ENCODE measurements at regions of chrX and their contacts with region 1.

Region 1: GRCh38 chrX:107894038-107894437 is 68.4 kb downstream of the MID2 start:
- DNase-seq: no peak
- H3K4me3 Mint-ChIP-seq: no peak overlapping the region
- H3K27ac Mint-ChIP-seq: no peak overlapping the region
- H3K4me1 Mint-ChIP-seq: no peaks in the 10 kb centered on the region
- H3K27me3 Mint-ChIP-seq: no peaks in the 10 kb centered on the region

Region 2: GRCh38 chrX:107537815-107538214 is 356.2 kb before region 1 on chrX:
- CTCF ChIA-PET with region 1: no interaction called
- POLR2A ChIA-PET with region 1: no interaction called
- intact Hi-C with region 1: loop called (anchors 5 kb)
- DNase-seq: peak; percentile 50
- H3K4me3 Mint-ChIP-seq: no peak overlapping the region
- H3K27ac Mint-ChIP-seq: no peak overlapping the region
- H3K4me1 Mint-ChIP-seq: no peaks in the 10 kb centered on the region
- H3K27me3 Mint-ChIP-seq: peaks cover 8% of the 10 kb centered on the region

Region 3: GRCh38 chrX:107654872-107655761 is 238.9 kb before region 1 on chrX:
- CTCF ChIA-PET with region 1: interaction called, 13 read pairs
- POLR2A ChIA-PET with region 1: no interaction called
- intact Hi-C with region 1: loop called (anchors 1 kb)
- DNase-seq: peak; percentile 73
- H3K4me3 Mint-ChIP-seq: no peak overlapping the region
- H3K27ac Mint-ChIP-seq: no peak overlapping the region
- H3K4me1 Mint-ChIP-seq: peaks cover 13% of the 10 kb centered on the region
- H3K27me3 Mint-ChIP-seq: no peaks in the 10 kb centered on the region

Region 4: DNA sequence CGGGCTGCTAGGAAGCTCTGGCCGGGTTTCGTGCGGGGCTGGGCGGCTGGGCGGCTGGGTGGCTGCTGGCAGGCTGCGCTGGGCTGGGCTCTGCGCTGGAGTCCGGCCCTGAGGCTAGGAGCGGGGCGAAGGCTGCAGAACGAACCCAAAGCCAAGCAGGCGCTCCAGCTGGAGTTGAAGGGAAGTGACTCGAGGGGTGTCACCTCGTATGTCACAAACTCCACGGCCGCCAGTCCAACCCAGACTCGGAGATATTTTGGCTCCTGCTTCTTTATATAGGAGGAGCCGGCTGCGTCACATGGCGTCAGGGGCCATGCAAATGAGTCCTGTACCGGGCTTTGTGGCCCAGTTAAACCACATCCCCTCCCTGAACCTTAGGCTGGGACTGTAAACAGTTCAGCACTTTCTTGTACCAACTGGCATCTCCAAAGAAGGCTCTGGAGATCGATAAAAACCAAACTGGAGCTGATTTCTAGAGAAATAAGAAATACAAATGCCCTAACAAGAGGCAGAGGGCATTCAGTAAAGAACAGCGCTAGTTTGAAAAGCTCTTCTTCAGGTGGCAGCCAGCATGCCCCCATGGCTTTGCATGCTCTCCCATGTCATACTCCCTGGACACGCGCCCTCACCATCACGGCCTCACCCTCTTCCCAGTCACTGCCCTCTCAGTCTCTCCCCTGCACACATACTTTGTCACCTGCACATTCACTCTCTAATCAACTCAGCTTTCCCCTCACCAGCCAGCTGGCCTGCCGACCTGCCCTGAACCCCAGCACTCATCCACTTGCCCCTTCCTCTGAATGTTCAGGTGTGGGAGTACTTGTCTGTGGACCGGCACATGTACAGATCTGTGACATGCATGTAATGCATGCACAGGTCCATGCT is 177.0 kb before region 1 on chrX:
- CTCF ChIA-PET with region 1: no interaction called
- POLR2A ChIA-PET with region 1: no interaction called
- intact Hi-C with region 1: loop called (anchors 2 kb)
- DNase-seq: peak; percentile 91
- H3K4me3 Mint-ChIP-seq: peak overlapping the region; percentile 89
- H3K27ac Mint-ChIP-seq: peak overlapping the region; percentile 90
- H3K4me1 Mint-ChIP-seq: peaks cover 44% of the 10 kb centered on the region
- H3K27me3 Mint-ChIP-seq: no peaks in the 10 kb centered on the region

Region 5: GRCh38 chrX:107826238-107827029 is 67.6 kb before region 1 on chrX:
- CTCF ChIA-PET with region 1: no interaction called
- POLR2A ChIA-PET with region 1: no interaction called
- intact Hi-C with region 1: loop called (anchors 5 kb)
- DNase-seq: peak; percentile 38
- H3K4me3 Mint-ChIP-seq: peak overlapping the region; percentile 74
- H3K27ac Mint-ChIP-seq: peak overlapping the region; percentile 71
- H3K4me1 Mint-ChIP-seq: peaks cover 43% of the 10 kb centered on the region
- H3K27me3 Mint-ChIP-seq: no peaks in the 10 kb centered on the region

Region 6: GRCh38 chrX:108001174-108001814 is 107.3 kb after region 1 on chrX:
- CTCF ChIA-PET with region 1: no interaction called
- POLR2A ChIA-PET with region 1: no interaction called
- intact Hi-C with region 1: loop called (anchors 10 kb)
- DNase-seq: peak; percentile 27
- H3K4me3 Mint-ChIP-seq: no peak overlapping the region
- H3K27ac Mint-ChIP-seq: no peak overlapping the region
- H3K4me1 Mint-ChIP-seq: no peaks in the 10 kb centered on the region
- H3K27me3 Mint-ChIP-seq: no peaks in the 10 kb centered on the region

Region 7: DNA sequence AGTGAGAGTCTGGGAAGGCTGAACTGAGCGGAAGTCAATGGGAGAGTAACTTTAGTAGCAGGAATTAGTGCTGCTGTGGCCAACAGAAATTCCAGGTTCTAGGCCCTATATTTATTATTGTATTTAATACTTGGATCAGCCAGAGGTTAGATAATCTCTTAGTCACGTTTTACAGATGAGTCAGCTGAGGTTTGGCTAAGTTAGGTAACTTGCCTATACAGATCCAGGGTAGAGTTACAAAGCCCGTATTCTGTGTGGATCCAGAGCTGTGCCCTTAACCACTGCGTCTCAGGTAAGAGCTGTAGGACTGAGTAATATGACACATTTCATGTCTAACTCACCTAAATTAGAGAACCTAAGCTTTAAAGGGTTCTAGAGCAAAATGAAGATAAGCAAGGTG is 176.9 kb after region 1 on chrX:
- CTCF ChIA-PET with region 1: no interaction called
- POLR2A ChIA-PET with region 1: no interaction called
- intact Hi-C with region 1: loop called (anchors 5 kb)
- DNase-seq: no peak
- H3K4me3 Mint-ChIP-seq: no peak overlapping the region
- H3K27ac Mint-ChIP-seq: no peak overlapping the region
- H3K4me1 Mint-ChIP-seq: peaks cover 3% of the 10 kb centered on the region
- H3K27me3 Mint-ChIP-seq: no peaks in the 10 kb centered on the region